Caco-2 (cell line): ENCODE measurements at regions of chr20 and their contacts with region 1.

Region 1: GRCh38 chr20:31712564-31713311 is 9.9 kb downstream of the BCL2L1 start:
- DNase-seq: peak; percentile 98 to 99
- H3K4me3 ChIP-seq: no peak overlapping the region
- H3K4me3 Mint-ChIP-seq: peak overlapping the region; percentile 69
- H3K27ac Mint-ChIP-seq: peak overlapping the region; percentile 97
- H3K4me1 ChIP-seq: peaks cover 95% of the 10 kb centered on the region
- H3K4me1 Mint-ChIP-seq: peaks cover 86% of the 10 kb centered on the region
- H3K27me3 ChIP-seq: no peaks in the 10 kb centered on the region
- H3K27me3 Mint-ChIP-seq: no peaks in the 10 kb centered on the region
- CTCF ChIP-seq: no peak

Region 2: GRCh38 chr20:31605031-31605901 is 107.5 kb before region 1 on chr20 and contains the start of gene ID1:
- CTCF ChIA-PET with region 1: interaction called, 3 read pairs
- POLR2A ChIA-PET with region 1: interaction called, 10 read pairs
- intact Hi-C with region 1: no loop called
- DNase-seq: peak; percentile 100
- H3K4me3 ChIP-seq: peak within 1 kb of the TSS; percentile 63
- H3K4me3 Mint-ChIP-seq: peak within 1 kb of the TSS; percentile 88
- H3K27ac Mint-ChIP-seq: peak within 1 kb of the TSS; percentile 98
- H3K4me1 ChIP-seq: peaks cover 54% of the 10 kb centered on the region
- H3K4me1 Mint-ChIP-seq: peaks cover 49% of the 10 kb centered on the region
- H3K27me3 ChIP-seq: no peaks in the 10 kb centered on the region
- H3K27me3 Mint-ChIP-seq: no peaks in the 10 kb centered on the region
- CTCF ChIP-seq: no peak
- total RNA-seq, gene ID1: 157 and 163 TPM in 2 replicates

Region 3: GRCh38 chr20:31674895-31675827 is 37.6 kb before region 1 on chr20:
- CTCF ChIA-PET with region 1: interaction called, 6 read pairs
- POLR2A ChIA-PET with region 1: interaction called, 18 read pairs
- intact Hi-C with region 1: loop called (anchors 2 kb)
- DNase-seq: no peak
- H3K4me3 ChIP-seq: no peak overlapping the region
- H3K4me3 Mint-ChIP-seq: peak overlapping the region; percentile 26
- H3K27ac Mint-ChIP-seq: peak overlapping the region; percentile 81
- H3K4me1 ChIP-seq: peaks cover 78% of the 10 kb centered on the region
- H3K4me1 Mint-ChIP-seq: peaks cover 72% of the 10 kb centered on the region
- H3K27me3 ChIP-seq: no peaks in the 10 kb centered on the region
- H3K27me3 Mint-ChIP-seq: no peaks in the 10 kb centered on the region
- CTCF ChIP-seq: no peak

Region 4: DNA sequence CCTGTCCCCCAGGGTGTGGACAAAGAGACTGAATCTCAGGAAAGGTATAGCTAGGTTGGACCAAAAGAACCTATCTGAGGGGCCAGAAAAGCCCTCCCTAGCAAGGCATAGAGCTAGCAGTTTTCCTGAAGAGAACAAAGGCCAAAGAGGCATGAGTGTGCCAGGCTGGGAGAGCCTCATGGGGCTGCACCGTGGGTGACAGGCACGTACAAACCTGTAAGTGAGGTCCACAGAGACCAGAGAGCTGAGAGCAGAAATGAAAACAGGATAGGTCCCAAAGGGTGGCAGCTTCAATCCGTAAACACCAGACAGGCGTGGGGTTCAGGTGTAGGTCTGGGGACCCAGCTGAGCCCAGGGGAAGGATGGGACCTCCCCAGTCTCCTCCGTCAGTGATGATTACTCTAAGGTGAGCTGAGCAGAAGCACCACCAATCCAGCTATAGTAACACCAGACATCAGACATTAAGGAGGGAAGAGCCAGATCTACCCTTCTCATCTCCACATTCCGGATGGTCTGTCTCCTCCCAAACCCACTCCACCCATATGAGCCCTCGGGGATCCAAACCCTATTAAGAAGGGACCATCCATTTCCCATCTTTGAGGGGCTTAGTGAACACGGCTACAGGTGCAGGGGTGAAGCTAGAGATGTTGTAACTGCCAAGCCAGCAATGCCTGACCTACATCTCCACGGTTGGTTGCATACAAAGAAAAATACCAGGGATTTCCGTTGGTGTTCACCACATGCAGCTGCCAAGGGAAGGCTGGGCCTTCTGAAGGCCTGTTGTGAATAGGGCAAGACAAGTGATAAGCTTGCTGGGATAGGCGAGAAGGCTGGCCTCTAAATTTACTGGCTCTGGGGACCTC is 28.4 kb before region 1 on chr20:
- CTCF ChIA-PET with region 1: interaction called, 4 read pairs
- POLR2A ChIA-PET with region 1: interaction called, 18 read pairs
- intact Hi-C with region 1: loop called (anchors 2 kb)
- DNase-seq: no peak
- H3K4me3 ChIP-seq: no peak overlapping the region
- H3K4me3 Mint-ChIP-seq: no peak overlapping the region
- H3K27ac Mint-ChIP-seq: peak overlapping the region; percentile 73
- H3K4me1 ChIP-seq: peaks cover 85% of the 10 kb centered on the region
- H3K4me1 Mint-ChIP-seq: peaks cover 86% of the 10 kb centered on the region
- H3K27me3 ChIP-seq: no peaks in the 10 kb centered on the region
- H3K27me3 Mint-ChIP-seq: no peaks in the 10 kb centered on the region
- CTCF ChIP-seq: no peak

Region 5: DNA sequence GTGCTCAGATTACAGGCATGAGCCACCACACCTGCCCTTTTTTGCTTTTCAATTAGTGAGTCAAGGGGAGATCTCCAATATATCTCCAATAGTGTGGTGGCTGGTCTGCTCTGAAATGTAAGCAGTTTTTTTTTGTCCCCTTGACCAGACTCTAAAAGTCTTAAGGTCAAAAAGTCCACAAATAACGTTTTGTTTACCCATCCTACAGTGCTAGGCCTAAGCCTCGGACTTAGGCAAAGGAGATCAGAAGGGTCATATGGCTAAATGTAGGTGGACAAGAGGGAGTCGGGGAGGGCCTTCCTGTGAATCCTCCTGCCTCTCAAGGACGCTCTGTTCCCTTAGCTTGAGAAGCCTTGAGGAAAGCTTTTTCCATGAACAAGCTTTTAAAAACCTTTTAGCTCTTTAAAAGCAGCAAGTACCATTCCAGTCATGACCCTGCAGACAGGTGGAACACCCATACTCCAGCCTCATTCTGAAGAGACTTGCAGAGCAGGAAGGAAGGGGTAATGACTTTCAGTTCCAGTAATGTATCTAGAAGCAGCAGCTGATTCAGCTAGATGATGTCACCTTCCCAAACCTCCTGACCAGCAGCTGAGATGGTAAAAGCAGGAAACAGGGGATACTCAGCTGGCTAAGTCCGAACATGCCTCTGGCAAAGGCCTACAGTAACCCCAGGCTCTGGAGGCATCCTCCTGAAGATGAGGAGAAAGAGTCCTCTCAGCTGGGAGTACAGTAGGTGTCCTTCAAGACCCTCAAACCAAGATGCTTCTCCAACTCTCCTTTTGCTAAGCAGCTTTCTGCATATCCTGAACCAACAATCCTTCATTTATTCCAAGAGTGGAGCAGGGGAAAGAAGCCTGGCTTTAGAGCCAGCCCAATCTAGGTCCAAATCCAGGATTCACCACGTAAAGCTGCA is 13.7 kb before region 1 on chr20:
- CTCF ChIA-PET with region 1: interaction called, 7 read pairs
- POLR2A ChIA-PET with region 1: interaction called, 178 read pairs
- intact Hi-C with region 1: loop called (anchors 1 kb)
- DNase-seq: peak in 1 of 2 experiments; percentile 57
- H3K4me3 ChIP-seq: no peak overlapping the region
- H3K4me3 Mint-ChIP-seq: peak overlapping the region; percentile 44
- H3K27ac Mint-ChIP-seq: peak overlapping the region; percentile 89
- H3K4me1 ChIP-seq: peaks cover 94% of the 10 kb centered on the region
- H3K4me1 Mint-ChIP-seq: peaks cover 73% of the 10 kb centered on the region
- H3K27me3 ChIP-seq: no peaks in the 10 kb centered on the region
- H3K27me3 Mint-ChIP-seq: no peaks in the 10 kb centered on the region
- CTCF ChIP-seq: no peak

Region 6: DNA sequence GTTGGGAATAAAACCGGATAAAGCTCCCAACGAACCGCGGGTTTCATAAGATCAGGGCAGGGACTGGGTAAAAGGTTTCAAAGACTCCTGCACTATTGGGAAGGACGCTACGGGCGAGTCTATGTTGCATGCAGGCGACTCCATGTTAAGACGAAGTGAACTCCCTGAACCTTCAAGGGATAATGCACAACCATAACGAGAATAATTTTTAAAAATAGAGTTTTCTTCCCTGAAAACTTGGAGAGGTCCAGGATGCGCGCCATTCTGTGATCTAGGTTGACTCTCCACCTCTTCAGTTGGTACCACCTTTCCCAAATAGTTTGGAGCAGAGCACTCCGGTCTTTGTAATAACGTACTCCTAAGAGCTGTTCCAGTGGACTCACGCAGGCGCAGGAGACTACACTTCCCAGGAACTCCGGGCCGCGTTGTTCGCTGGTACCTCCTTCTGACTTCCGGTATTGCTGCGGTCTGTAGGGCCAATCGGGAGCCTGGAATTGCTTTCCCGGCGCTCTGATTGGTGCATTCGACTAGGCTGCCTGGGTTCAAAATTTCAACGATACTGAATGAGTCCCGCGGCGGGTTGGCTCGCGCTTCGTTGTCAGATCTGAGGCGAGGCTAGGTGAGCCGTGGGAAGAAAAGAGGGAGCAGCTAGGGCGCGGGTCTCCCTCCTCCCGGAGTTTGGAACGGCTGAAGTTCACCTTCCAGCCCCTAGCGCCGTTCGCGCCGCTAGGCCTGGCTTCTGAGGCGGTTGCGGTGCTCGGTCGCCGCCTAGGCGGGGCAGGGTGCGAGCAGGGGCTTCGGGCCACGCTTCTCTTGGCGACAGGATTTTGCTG is 26.2 kb after region 1 on chr20 and contains the start of gene TPX2:
- CTCF ChIA-PET with region 1: interaction called, 3 read pairs
- POLR2A ChIA-PET with region 1: no interaction called
- intact Hi-C with region 1: loop called (anchors 1 kb)
- DNase-seq: peak; percentile 99 to 100
- H3K4me3 ChIP-seq: peak within 1 kb of the TSS; percentile 72
- H3K4me3 Mint-ChIP-seq: no peak within 1 kb of the TSS
- H3K27ac Mint-ChIP-seq: no peak within 1 kb of the TSS
- H3K4me1 ChIP-seq: 0 out of 2 replicates have a peak, but pooled peaks cover 6% of the 10 kb centered on the region
- H3K4me1 Mint-ChIP-seq: no peaks in the 10 kb centered on the region
- H3K27me3 ChIP-seq: no peaks in the 10 kb centered on the region
- H3K27me3 Mint-ChIP-seq: no peaks in the 10 kb centered on the region
- CTCF ChIP-seq: peak in 1 of 2 experiments; percentile 66
- total RNA-seq, gene TPX2: 221 and 237 TPM in 2 replicates

Region 7: DNA sequence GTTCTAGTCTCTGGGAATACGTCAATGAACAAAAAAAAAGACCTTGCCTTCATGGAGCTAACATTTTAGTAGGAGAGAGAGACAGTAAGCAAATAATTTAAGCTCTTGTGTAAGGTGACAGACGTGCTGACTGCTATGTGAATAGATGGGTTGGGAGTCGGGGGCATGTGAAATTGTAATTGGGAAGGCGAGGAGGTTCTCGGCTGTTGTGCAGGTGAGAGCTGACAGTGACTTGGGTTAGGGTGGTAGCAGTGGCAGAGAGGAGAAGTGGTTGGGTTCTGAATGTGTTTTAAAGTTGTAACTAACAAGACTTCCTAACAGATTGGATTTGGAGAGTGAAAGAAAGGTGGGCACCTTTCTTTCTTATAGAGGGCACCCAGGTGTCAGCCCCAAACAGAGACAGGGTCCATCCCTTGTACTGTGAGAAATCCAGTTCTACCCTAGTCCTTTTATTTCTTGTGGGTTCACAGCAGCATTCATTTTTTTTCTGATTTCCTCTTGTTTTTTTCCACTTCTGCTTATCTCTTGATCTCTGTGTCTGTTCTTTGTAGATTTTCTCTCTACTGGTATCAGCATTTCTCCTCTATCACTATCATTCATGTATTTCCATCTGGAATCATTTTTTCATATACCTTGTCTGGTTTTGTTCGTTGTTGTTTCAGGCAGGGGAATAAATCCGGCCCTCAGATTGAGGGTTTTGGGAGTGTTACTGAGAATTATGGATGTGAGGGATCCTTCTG is 91.0 kb after region 1 on chr20:
- CTCF ChIA-PET with region 1: no interaction called
- POLR2A ChIA-PET with region 1: no interaction called
- intact Hi-C with region 1: no loop called
- DNase-seq: no peak
- H3K4me3 ChIP-seq: no peak overlapping the region
- H3K4me3 Mint-ChIP-seq: no peak overlapping the region
- H3K27ac Mint-ChIP-seq: no peak overlapping the region
- H3K4me1 ChIP-seq: no peaks in the 10 kb centered on the region
- H3K4me1 Mint-ChIP-seq: no peaks in the 10 kb centered on the region
- H3K27me3 ChIP-seq: no peaks in the 10 kb centered on the region
- H3K27me3 Mint-ChIP-seq: no peaks in the 10 kb centered on the region
- CTCF ChIP-seq: no peak

Region 8: GRCh38 chr20:32227744-32228688 is 515.3 kb after region 1 on chr20:
- CTCF ChIA-PET with region 1: no interaction called
- POLR2A ChIA-PET with region 1: interaction called, 3 read pairs
- intact Hi-C with region 1: loop called (anchors 5 kb)
- DNase-seq: peak; percentile 100
- H3K4me3 ChIP-seq: no peak overlapping the region
- H3K4me3 Mint-ChIP-seq: peak overlapping the region; percentile 59
- H3K27ac Mint-ChIP-seq: peak overlapping the region; percentile 99
- H3K4me1 ChIP-seq: peaks cover 57% of the 10 kb centered on the region
- H3K4me1 Mint-ChIP-seq: peaks cover 71% of the 10 kb centered on the region
- H3K27me3 ChIP-seq: no peaks in the 10 kb centered on the region
- H3K27me3 Mint-ChIP-seq: no peaks in the 10 kb centered on the region
- CTCF ChIP-seq: no peak